ENCODE measurements at regions of chr1 and their contacts with region 1.

Region 1: DNA sequence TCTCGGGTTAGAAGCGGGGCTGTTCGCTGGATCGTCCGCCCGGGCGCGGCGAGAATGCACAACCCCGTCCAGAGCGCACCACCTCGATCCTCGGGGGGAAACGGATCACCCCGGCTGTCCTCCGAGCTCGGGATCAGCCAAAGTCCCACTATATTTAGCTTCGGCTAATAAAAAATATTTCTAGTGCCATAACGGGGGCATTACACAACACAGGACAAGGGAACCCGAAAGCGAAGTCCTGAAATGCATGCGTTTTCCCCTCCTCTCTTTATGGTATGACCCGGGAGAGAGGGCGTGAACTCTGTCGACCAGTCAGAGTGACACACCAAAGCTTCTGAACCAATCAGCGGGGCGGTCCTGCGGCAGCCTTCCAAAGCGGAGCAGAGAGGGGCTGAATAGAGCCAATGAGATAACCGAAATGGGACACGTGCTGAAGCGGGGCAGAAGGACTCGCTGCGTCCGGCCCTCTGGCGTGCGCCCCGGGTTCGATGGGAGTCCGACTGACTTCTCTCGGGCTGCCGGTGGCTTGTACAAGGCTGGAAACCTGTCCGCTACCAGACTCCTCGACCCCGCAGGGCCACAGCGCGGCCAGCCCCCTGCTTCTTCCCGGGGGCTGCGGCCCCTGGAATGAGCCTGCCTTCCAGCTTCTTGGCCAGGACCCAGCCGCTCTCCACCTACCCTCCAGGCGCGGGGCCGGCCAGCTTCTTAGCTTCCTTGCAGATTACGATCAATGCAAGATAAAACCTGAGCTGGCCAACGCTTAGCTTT is at the start of gene ALDH4A1:
- DNase-seq: peak; percentile 96
- H3K4me3 Mint-ChIP-seq: peak within 1 kb of the TSS; percentile 80
- H3K27ac Mint-ChIP-seq: peak within 1 kb of the TSS; percentile 86
- H3K4me1 Mint-ChIP-seq: peaks cover 33% of the 10 kb centered on the region
- H3K27me3 Mint-ChIP-seq: no peaks in the 10 kb centered on the region
- total RNA-seq, gene ALDH4A1: 3.3 to 3.7 TPM

Region 2: DNA sequence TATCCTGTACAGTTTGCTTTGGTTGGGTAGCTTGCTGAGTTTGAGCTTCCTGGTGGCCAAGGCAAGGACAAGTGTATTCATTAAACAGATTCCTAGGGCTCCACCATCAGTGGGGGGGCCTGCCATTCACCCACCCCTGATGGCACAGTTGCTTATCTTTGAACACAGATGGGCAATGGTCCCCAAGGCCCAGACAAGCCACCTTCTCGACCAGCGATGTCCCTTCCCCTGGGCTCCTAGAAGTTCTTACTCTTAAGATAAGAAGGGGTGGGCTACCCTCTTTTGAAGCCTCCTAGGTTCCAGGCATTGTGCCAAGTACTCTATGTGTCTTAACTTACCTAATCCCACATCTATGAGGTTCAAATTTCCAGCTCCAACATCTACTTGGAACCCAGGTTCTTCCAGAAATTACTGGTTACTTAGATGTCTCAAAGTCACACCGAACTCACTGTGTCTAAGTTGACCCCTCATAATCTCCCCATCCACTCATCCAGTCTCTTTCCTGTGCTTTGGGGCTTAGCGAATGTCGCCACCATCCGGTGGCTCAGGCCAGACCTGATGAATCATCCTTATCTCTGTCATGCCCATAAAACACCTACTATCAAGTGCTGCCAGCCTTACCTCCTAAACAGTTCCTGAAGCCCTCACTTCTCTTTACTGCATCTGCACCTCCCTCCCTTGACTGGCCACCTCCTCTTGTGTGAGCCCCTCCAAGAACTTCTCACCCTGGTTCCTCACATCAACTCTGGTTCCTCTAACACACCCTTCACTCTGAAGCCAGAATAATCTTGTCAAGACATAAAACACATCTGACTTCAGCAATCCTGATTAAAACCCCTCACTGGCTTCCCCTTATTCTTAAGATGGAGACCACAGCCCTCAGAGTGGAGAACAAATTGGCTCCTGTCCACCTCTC is 371.9 kb before region 1 on chr1:
- CTCF ChIA-PET with region 1: no interaction called
- POLR2A ChIA-PET with region 1: no interaction called
- DNase-seq: no peak
- H3K4me3 Mint-ChIP-seq: no peak overlapping the region
- H3K27ac Mint-ChIP-seq: no peak overlapping the region
- H3K4me1 Mint-ChIP-seq: no peaks in the 10 kb centered on the region
- H3K27me3 Mint-ChIP-seq: peaks cover 9% of the 10 kb centered on the region

Region 3: DNA sequence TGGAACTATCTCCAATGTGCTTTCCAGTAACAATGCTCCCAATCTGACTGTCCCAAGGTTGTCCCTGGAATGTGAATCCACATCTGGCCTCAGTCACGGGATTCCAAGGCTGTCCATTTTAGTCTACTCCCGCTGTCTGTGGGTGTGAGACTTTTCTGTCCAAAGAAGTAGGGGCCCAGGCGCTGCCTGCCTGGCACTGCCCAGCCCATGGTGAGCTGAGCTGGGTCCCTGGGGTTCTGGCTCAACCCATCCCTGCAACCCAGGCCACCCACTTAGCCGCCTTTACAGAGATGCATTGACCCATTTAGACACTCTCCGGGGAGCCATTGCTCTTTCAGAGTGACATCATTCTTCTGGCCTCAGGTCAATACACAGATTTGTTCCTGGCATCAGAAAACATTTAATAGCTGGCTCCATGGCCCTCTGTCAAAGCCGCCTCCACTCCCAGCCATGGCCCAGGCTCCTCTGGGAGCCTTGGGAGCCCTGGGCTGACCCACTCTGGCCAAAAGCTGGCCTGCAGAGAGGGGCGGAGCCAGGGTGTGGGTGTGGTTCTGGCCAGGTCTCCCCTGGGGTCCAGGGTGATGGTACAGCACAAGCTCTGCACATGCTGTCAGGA is 319.3 kb before region 1 on chr1:
- CTCF ChIA-PET with region 1: no interaction called
- POLR2A ChIA-PET with region 1: no interaction called
- DNase-seq: no peak
- H3K4me3 Mint-ChIP-seq: no peak overlapping the region
- H3K27ac Mint-ChIP-seq: no peak overlapping the region
- H3K4me1 Mint-ChIP-seq: no peaks in the 10 kb centered on the region
- H3K27me3 Mint-ChIP-seq: peaks cover 4% of the 10 kb centered on the region

Region 4: GRCh38 chr1:18913065-18913835 is 10.5 kb after region 1 on chr1:
- CTCF ChIA-PET with region 1: interaction called, 38 read pairs
- POLR2A ChIA-PET with region 1: interaction called, 9 read pairs
- DNase-seq: peak; percentile 74
- H3K4me3 Mint-ChIP-seq: no peak overlapping the region
- H3K27ac Mint-ChIP-seq: peak overlapping the region; percentile 44
- H3K4me1 Mint-ChIP-seq: peaks cover 5% of the 10 kb centered on the region
- H3K27me3 Mint-ChIP-seq: no peaks in the 10 kb centered on the region

Region 5: GRCh38 chr1:18956369-18957135 is 53.8 kb after region 1 on chr1 and contains the start of gene IFFO2:
- CTCF ChIA-PET with region 1: interaction called, 123 read pairs
- POLR2A ChIA-PET with region 1: interaction called, 19 read pairs
- DNase-seq: peak; percentile 97
- H3K4me3 Mint-ChIP-seq: peak within 1 kb of the TSS; percentile 83
- H3K27ac Mint-ChIP-seq: peak within 1 kb of the TSS; percentile 23
- H3K4me1 Mint-ChIP-seq: peaks cover 57% of the 10 kb centered on the region
- H3K27me3 Mint-ChIP-seq: peaks cover 24% of the 10 kb centered on the region
- total RNA-seq, gene IFFO2: 19.9 to 22.7 TPM

Region 6: GRCh38 chr1:19096036-19096833 is 193.5 kb after region 1 on chr1:
- CTCF ChIA-PET with region 1: interaction called, 10 read pairs
- POLR2A ChIA-PET with region 1: no interaction called
- DNase-seq: peak; percentile 32
- H3K4me3 Mint-ChIP-seq: no peak overlapping the region
- H3K27ac Mint-ChIP-seq: no peak overlapping the region
- H3K4me1 Mint-ChIP-seq: no peaks in the 10 kb centered on the region
- H3K27me3 Mint-ChIP-seq: no peaks in the 10 kb centered on the region